ENCODE measurements at regions of chr14 and their contacts with region 1.

Region 1: DNA sequence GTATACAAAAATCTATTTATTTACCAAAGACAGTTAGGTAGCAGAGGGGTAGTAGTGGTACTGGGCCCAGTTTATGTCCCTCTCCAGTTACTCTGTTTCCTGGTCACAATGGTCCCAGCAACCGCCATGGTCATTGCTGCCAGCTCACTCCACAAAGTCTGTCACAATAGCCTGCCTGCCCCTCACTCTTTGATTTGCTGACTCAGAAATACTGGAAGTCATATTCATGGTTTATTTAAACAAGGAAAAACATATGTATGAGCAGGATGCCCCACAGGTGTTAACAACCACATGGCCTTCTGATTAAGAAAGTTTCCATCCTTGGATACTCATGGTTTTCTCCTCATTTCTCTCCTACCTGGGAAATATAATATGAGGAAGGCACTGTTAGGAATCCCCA is 49.2 kb downstream of the TSHR start:
- DNase-seq: no peak

Region 2: DNA sequence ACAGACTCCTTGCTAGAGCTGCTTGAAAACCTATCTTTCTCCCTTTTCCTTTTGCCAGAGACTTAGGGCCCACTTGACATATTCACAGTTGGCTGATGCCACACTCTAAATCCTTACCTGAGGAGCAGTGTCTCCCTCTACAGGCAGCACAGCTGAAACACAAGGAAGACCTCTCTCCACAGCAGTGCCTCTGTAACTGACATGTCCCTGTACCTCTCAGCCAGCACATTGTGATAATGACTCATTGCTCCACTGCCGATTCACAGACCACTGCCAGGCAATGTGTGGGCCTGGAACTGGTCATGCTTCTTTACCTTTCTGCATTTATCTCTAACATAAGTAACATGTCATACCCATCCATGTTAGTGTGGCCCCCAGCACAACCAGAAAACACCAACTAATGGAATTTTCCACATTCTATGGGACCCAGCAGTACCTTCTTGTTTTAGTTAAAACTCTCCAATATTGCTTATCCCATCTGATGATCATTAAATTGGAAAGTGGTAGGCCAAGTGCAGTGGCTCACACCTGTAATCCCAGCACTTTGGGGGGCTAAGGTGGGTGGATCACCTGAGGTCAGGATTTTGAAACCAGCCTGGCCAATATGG is 159.7 kb after region 1 on chr14:
- intact Hi-C with region 1: loop called (anchors 5 kb)
- DNase-seq: peak in 39 of 42 donors; percentile 20 to 80 (median 52)